Panc1 (cell line): ENCODE measurements at regions of chr10 and their contacts with region 1.

Region 1: DNA sequence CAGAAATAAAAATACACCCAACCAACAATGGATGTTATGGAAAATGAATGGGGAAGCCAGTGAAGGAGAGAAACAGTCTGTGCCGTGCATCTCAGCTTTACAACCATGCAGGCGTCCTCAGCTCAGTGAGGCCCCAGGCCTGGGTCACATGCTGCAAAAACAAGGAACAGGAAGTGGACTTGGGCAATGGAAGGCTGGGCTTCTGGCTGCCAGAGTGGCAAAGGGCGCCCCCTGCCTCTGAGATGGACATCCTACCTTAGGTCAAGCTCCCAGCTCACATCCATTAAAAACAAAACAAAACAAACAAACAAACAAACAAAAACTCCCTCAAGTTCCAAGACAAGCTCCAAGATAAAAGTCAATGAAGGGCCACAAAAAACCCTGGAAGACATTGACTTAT is 54.7 kb upstream of the AFAP1L2 start:
- DNase-seq: no peak
- ATAC-seq: peak; percentile 82
- H3K4me3 ChIP-seq: no peak overlapping the region
- H3K27ac ChIP-seq: no peak overlapping the region
- H3K4me1 ChIP-seq: no peaks in the 10 kb centered on the region
- H3K27me3 ChIP-seq: no peaks in the 10 kb centered on the region
- CTCF ChIP-seq: peak; percentile 76

Region 2: DNA sequence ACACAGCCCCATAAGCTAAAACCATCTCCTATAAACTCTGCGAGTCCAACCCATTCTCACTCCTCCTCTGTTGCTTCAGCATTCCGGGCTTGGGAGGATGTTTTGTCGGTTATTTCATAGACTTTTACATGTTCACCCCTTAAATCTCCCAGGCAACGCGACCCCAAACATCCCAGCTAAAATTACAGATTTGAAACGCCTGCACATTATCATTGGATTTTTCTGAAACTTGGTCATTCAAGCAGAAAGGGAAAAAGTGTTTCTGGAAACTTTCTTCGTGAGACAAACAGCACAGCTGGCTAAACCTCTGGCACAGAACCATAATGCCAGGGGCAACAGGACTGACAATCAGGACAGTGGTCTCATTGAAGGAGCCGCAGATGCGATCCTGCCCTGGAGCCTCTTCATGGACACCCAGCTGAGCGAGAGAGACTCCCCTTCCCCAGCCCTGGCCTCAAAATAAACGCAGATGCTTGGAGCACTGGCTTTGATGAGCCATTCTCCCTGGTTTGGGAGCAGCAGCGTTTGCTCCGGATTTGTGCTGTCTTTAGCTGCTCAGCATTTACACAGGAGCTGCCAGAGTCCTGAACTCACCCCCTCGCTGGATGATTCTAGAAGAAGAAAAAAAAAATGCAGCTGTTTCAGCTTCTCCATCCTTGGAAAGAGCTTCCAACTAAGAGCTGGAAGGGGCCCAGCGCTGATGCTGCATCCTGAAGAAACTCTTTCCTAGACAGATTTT is 84.7 kb before region 1 on chr10:
- CTCF ChIA-PET with region 1: no interaction called
- POLR2A ChIA-PET with region 1: interaction called, 11 read pairs
- in situ Hi-C with region 1: no loop called
- intact Hi-C with region 1: no loop called
- DNase-seq: no peak
- ATAC-seq: peak; percentile 49
- H3K4me3 ChIP-seq: no peak overlapping the region
- H3K27ac ChIP-seq: peak overlapping the region; percentile 58
- H3K4me1 ChIP-seq: peaks cover 51% of the 10 kb centered on the region
- H3K27me3 ChIP-seq: no peaks in the 10 kb centered on the region
- CTCF ChIP-seq: no peak

Region 3: GRCh38 chr10:114388275-114388674 is 70.7 kb before region 1 on chr10:
- CTCF ChIA-PET with region 1: no interaction called
- POLR2A ChIA-PET with region 1: no interaction called
- in situ Hi-C with region 1: no loop called
- intact Hi-C with region 1: no loop called
- DNase-seq: no peak
- ATAC-seq: 0 out of 2 replicates have a peak, but pooled peaks have one; percentile 9
- H3K4me3 ChIP-seq: no peak overlapping the region
- H3K27ac ChIP-seq: peak overlapping the region; percentile 60; the same call in 1 of the 2 replicates
- H3K4me1 ChIP-seq: peaks cover 69% of the 10 kb centered on the region
- H3K27me3 ChIP-seq: no peaks in the 10 kb centered on the region
- CTCF ChIP-seq: no peak